ENCODE measurements at regions of chr3 and their contacts with region 1.

Region 1: GRCh38 chr3:39180546-39181346 is 11.6 kb downstream of the XIRP1 start:
- DNase-seq: peak; percentile 74
- ATAC-seq: peak; percentile 91
- H3K4me3 ChIP-seq: peak overlapping the region; percentile 31 to 67 (median 56)
- H3K27ac ChIP-seq: no peak overlapping the region
- H3K4me1 ChIP-seq: peaks cover 49% of the 10 kb centered on the region
- H3K27me3 ChIP-seq: peaks cover 3 to 24% of the 10 kb centered on the region in 2 experiments; a peak in 3 of 5 replicates
- CTCF ChIP-seq: peak; percentile 26; the same call in 1 of the 2 replicates
- EP300 ChIP-seq: no peak
- POLR2A ChIP-seq: no peak
- RAD21 ChIP-seq: peak; percentile 65; the same call in 1 of the 2 replicates

Region 2: DNA sequence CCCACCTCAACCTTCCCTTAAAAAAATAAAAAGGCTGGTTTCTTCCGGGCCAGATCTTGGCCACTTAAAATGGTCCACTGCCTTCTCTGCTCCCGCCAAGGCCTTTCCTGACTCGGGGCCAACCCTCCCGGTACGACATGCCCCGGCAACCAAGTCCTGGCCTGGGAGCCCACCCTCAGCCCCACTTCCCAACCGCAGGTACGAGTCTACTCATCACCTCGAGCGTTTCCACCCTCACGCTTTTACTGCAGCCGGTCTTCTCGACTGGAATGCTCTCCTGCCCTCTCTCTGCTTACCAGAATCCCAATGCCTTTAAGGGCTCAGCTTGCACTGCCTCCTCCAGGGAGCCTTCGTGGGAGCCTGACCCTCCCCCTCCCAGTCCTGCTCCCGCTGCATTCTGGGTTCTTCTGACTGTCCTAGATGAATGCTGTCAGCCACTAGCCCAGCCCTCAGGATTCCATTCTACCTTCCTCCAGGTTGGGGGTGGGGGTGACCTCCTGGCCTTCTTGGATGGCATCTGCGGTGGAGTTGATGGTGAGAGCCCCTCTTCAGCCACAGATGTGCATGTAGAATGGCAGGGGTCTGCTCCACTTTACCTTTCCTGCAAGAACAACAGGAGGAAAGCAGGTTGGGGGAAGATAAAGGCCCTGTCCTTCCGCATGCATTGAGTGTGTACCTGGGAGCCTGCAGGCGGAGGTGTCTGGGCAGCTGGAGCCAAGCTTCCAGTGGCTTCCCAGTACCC is 26.3 kb before region 1 on chr3:
- CTCF ChIA-PET with region 1: no interaction called
- POLR2A ChIA-PET with region 1: interaction called, 5 read pairs
- in situ Hi-C with region 1: no loop called
- intact Hi-C with region 1: loop called (anchors 1 kb)
- DNase-seq: peak; percentile 60
- ATAC-seq: peak; percentile 56
- H3K4me3 ChIP-seq: peak overlapping the region; percentile 73 to 91 (median 84)
- H3K27ac ChIP-seq: peak overlapping the region; percentile 73
- H3K4me1 ChIP-seq: peaks cover 47% of the 10 kb centered on the region
- H3K27me3 ChIP-seq: no peaks in the 10 kb centered on the region; a peak in 1 of 5 replicates
- CTCF ChIP-seq: 0 out of 2 replicates have a peak, but pooled peaks have one; percentile 7
- EP300 ChIP-seq: no peak
- POLR2A ChIP-seq: peak in 1 of 2 experiments; percentile 74; a peak in 2 of 4 replicates
- RAD21 ChIP-seq: no peak

Region 3: DNA sequence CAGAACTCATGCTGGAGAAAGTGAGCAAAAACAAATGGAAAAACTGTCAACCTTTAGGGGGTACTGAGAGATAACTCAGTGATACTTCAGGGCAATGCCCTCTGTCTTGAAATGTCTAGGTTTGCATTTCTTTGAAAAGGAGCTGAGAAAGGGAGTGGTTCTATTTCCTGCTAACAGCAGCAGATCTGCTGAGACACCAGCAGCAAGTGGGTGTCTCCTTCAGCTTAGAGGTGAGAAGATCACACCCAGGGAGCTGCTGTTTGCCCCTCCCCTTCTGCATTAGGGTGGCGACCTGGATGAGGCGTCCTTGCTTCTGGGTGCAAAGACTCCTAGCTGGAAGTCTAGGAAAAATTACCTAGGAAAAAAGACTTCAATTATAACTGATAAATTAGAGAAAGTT is 54.0 kb after region 1 on chr3:
- CTCF ChIA-PET with region 1: no interaction called
- POLR2A ChIA-PET with region 1: no interaction called
- in situ Hi-C with region 1: no loop called
- intact Hi-C with region 1: no loop called
- DNase-seq: no peak
- ATAC-seq: no peak
- H3K4me3 ChIP-seq: no peak overlapping the region
- H3K27ac ChIP-seq: no peak overlapping the region
- H3K4me1 ChIP-seq: no peaks in the 10 kb centered on the region
- H3K27me3 ChIP-seq: peaks cover 2 to 15% of the 10 kb centered on the region in 2 experiments; a peak in 2 of 5 replicates
- CTCF ChIP-seq: no peak
- EP300 ChIP-seq: no peak
- POLR2A ChIP-seq: no peak
- RAD21 ChIP-seq: no peak

Region 4: DNA sequence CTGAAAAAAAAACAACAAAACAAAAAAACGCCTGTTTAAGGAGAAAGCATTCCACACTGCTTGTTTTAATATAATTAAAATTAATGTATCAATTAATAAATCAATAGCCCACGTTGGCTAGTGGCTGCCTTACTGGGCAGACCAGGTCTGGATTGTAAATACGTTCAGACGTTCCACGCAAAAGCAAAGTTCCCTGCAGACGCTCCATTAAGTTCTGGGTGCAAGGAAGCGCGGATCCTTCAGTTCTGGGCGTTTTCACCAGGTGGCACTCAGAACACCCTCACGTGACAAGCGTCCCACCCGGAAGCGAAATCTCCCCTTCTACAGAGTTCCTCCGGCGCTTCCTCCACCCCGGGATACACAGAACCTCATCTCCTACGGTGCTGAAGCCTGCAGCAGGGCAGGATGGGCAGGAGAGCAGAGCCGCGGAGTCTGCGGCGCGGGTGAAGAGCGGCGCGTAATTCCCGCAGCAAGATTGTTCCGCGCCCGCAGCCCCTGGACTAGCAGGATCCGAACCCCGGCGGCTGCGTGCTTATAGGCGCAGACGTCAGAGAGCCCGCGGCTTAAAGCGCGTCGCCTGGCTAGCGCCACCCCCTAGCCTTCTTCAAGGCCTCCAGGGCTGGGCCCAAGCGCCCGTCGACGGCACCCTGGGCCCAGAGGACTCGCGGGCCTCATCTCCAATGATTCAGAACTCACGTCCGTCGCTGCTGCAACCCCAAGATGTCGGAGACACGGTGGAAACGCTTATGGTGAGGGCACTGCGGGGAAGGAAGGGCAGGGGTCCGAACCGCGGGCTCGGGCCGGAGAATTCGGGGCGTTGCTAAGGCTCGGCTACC is 202.5 kb after region 1 on chr3 and contains the start of gene SLC25A38:
- CTCF ChIA-PET with region 1: no interaction called
- POLR2A ChIA-PET with region 1: interaction called, 3 read pairs
- in situ Hi-C with region 1: loop called (anchors 10 kb)
- intact Hi-C with region 1: no loop called
- DNase-seq: peak; percentile 82
- ATAC-seq: peak; percentile 86
- H3K4me3 ChIP-seq: peak within 1 kb of the TSS; percentile 84 to 89 (median 86)
- H3K27ac ChIP-seq: peak within 1 kb of the TSS; percentile 89
- H3K4me1 ChIP-seq: peaks cover 56% of the 10 kb centered on the region
- H3K27me3 ChIP-seq: no peaks in the 10 kb centered on the region
- CTCF ChIP-seq: peak; percentile 59
- EP300 ChIP-seq: no peak
- POLR2A ChIP-seq: peak; percentile 64 to 69
- RAD21 ChIP-seq: no peak; the same call in 1 of the 2 replicates
- total RNA-seq, gene SLC25A38: 32.5 and 33.7 TPM in 2 replicates